ENCODE measurements at regions of chr12 and their contacts with region 1.

Region 1: GRCh38 chr12:6278439-6279255 is 31.8 kb upstream of the PLEKHG6 start:
- DNase-seq: peak; percentile 77 to 89
- ATAC-seq: peak; percentile 98 to 99 (median 99)
- H3K4me3 ChIP-seq: no peak overlapping the region
- H3K4me3 Mint-ChIP-seq: peak overlapping the region; percentile 75
- H3K27ac ChIP-seq: no peak overlapping the region
- H3K27ac Mint-ChIP-seq: no peak overlapping the region
- H3K4me1 ChIP-seq: peaks cover 10% of the 10 kb centered on the region
- H3K4me1 Mint-ChIP-seq: no peaks in the 10 kb centered on the region
- H3K27me3 ChIP-seq: peaks cover 16% of the 10 kb centered on the region
- H3K27me3 Mint-ChIP-seq: peaks cover 14 to 47% of the 10 kb centered on the region in 2 donors
- CTCF ChIP-seq: peak; percentile 62

Region 2: GRCh38 chr12:5648692-5649359 is 629.8 kb before region 1 on chr12:
- intact Hi-C with region 1: no loop called
- DNase-seq: no peak
- ATAC-seq: no peak
- H3K4me3 ChIP-seq: no peak overlapping the region
- H3K4me3 Mint-ChIP-seq: no peak overlapping the region
- H3K27ac ChIP-seq: no peak overlapping the region
- H3K27ac Mint-ChIP-seq: no peak overlapping the region
- H3K4me1 ChIP-seq: no peaks in the 10 kb centered on the region
- H3K4me1 Mint-ChIP-seq: no peaks in the 10 kb centered on the region
- H3K27me3 ChIP-seq: no peaks in the 10 kb centered on the region
- H3K27me3 Mint-ChIP-seq: peaks cover 5 to 7% of the 10 kb centered on the region in 2 donors
- CTCF ChIP-seq: no peak

Region 3: DNA sequence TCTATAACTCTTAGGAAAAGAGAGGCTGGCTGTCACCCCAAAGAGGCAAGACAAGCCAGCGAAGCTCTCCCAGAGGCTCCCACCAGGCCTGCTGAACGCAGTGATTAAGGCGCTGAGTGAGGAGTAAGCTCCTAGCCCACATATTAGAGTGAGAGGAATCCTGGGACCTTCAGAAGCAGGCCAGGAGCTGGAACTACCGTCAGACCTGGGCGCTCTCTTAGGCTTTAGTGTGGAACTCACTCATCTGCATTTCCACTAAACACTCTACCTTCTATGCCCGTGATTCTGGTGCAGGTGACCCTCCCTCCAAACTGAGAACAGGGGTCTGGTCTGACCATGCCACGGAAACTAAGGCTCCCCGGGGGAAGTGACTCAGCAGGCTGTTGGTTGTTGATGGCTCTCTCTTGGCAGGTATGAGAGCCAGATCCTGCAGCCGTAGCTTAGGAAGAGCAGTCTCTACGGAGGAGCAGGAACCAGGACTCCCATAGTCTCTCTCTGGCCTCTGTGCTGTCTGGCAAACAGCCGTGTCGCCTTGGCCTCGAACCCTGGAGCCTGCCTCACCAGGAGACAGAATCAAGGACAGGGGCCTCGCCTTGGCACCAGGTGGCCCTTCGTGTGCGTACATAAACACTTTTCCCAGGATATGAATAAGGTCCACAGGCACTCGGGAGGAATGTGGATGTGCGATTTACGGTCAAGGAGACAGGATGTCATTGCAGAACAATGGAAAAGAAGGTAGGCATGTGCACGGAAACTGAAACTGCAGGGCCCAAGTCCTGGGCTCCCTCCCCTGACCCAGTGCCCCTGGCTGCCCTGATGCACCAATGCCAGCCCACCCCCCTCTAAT is 162.2 kb before region 1 on chr12:
- intact Hi-C with region 1: no loop called
- DNase-seq: no peak
- ATAC-seq: no peak
- H3K4me3 ChIP-seq: no peak overlapping the region
- H3K4me3 Mint-ChIP-seq: no peak overlapping the region
- H3K27ac ChIP-seq: no peak overlapping the region
- H3K27ac Mint-ChIP-seq: no peak overlapping the region
- H3K4me1 ChIP-seq: peaks cover 5% of the 10 kb centered on the region
- H3K4me1 Mint-ChIP-seq: peaks cover 12 to 13% of the 10 kb centered on the region in 2 donors
- H3K27me3 ChIP-seq: no peaks in the 10 kb centered on the region
- H3K27me3 Mint-ChIP-seq: no peaks in the 10 kb centered on the region
- CTCF ChIP-seq: no peak

Region 4: GRCh38 chr12:6195665-6196535 is 82.7 kb before region 1 on chr12:
- intact Hi-C with region 1: loop called (anchors 1 kb)
- DNase-seq: peak; percentile 65 to 84
- ATAC-seq: peak; percentile 72 to 89 (median 85)
- H3K4me3 ChIP-seq: no peak overlapping the region
- H3K4me3 Mint-ChIP-seq: no peak overlapping the region
- H3K27ac ChIP-seq: no peak overlapping the region
- H3K27ac Mint-ChIP-seq: no peak overlapping the region
- H3K4me1 ChIP-seq: peaks cover 13% of the 10 kb centered on the region
- H3K4me1 Mint-ChIP-seq: peaks cover 0 to 17% of the 10 kb centered on the region in 2 donors
- H3K27me3 ChIP-seq: peaks cover 9% of the 10 kb centered on the region
- H3K27me3 Mint-ChIP-seq: peaks cover 23 to 27% of the 10 kb centered on the region in 2 donors
- CTCF ChIP-seq: peak; percentile 83

Region 5: GRCh38 chr12:6297170-6297569 is 18.5 kb after region 1 on chr12:
- intact Hi-C with region 1: loop called (anchors 1 kb)
- DNase-seq: no peak
- ATAC-seq: no peak
- H3K4me3 ChIP-seq: no peak overlapping the region
- H3K4me3 Mint-ChIP-seq: no peak overlapping the region
- H3K27ac ChIP-seq: no peak overlapping the region
- H3K27ac Mint-ChIP-seq: no peak overlapping the region
- H3K4me1 ChIP-seq: no peaks in the 10 kb centered on the region
- H3K4me1 Mint-ChIP-seq: no peaks in the 10 kb centered on the region
- H3K27me3 ChIP-seq: no peaks in the 10 kb centered on the region
- H3K27me3 Mint-ChIP-seq: peaks cover 0 to 6% of the 10 kb centered on the region in 2 donors
- CTCF ChIP-seq: no peak